ENCODE measurements at regions of chr10 and their contacts with region 1.

Region 1: DNA sequence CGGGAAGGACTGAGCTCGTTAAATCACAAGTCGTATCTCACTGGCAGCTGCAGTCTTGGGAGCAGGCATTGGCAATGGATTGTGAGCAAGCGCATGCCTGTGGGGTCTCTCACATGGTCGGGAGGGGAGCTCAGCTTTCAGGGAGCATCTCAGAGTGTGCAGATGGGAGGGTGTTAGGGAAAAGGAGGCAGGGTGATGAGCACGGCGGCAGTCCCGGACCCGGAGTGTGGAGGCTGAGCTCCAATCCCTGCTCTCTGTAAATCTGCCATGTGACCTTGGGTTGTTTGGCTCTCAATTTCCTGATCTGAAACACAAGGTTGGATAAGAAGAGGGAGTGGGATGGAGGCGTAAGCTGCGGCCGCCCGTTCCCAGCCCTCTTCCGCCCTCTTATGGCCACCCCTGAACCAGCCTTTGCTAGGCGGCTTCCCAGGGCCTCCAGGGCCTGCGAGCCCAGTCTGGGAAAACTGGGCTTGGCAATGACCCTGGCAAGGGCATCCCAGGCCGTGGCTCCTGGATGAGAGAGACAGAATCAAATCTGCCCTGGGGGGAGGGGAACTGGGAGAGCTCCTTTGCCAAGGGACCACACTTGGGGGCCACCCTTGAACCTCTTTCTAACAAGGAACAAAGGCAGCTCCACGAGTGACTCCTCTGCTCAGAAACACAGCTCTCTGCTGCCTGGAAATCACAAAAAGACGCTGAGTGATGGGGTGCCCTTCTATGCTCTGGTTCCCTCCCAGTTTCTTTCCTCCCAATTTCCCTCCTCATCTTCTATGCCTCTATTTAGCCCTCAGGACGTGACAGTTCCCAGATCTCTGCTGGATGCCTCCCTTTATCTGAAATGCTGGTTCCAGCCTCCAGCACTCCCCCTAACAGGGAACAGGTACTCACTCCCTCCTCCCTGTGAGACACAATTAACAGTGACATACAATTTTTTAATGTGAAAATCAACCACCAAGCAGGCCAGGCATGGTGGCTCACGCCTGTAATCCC is 41.7 kb upstream of the LOXL4 start:
- DNase-seq: peak; percentile 63 to 75 (median 72)
- ATAC-seq: peak; percentile 93
- H3K4me3 ChIP-seq: no peak overlapping the region
- H3K4me1 ChIP-seq: no peaks in the 10 kb centered on the region
- CTCF ChIP-seq: peak; percentile 67

Region 2: DNA sequence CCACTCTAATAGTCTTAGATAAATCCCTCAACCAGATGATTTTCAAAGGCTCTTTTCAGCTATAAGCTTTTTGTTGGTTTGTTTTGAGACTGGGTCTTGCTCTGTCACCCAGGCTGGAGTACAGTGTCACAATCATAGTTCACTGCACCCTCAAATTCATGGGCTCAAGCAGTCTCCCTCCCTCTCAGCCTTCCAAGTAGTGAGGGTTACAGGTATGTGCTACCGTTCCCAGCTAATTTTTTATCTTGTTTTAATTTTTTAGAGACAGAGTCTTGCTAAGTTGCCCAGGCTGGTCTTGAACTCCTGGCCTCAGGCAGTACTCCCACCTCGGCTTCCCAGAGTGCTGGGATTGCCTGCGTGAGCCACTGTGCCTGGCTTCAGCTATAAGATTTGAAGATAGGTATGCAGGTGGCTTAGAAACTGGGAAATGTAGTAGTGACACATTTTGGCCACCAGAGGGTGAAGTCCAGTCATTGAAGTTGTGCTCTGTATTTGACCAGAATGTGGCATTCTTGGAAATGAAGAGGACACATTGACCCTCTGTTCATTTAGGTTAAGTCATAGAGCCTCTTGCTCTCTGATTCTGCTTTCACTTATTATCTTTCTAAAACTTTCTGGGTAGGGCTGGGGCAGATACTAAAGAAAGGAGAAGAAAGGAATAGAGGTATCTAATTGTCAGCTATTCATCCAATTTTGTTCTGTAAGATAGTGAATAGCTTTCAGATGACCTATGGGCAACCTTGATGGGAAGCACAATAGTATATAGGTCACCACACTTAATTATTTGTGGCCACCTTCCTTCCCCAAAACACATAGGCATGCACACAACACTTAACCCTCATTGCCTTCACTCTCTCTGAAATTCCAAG is 139.2 kb before region 1 on chr10:
- intact Hi-C with region 1: loop called in 1 of 2 experiments (anchors 10 kb)
- DNase-seq: peak in 1 of 3 donors; percentile 71
- ATAC-seq: peak; percentile 89
- H3K4me3 ChIP-seq: no peak overlapping the region
- H3K4me1 ChIP-seq: no peaks in the 10 kb centered on the region
- CTCF ChIP-seq: peak; percentile 46

Region 3: GRCh38 chr10:98242823-98243222 is 66.8 kb before region 1 on chr10:
- intact Hi-C with region 1: loop called in 1 of 2 experiments (anchors 5 kb)
- DNase-seq: no peak
- ATAC-seq: no peak
- H3K4me3 ChIP-seq: no peak overlapping the region
- H3K4me1 ChIP-seq: no peaks in the 10 kb centered on the region
- CTCF ChIP-seq: no peak

Measured in mucosa of descending colon (tissue), 3 donors.